CD4-positive, alpha-beta T cell (primary cell): ENCODE measurements at regions of chr1 and their contacts with region 1.

Region 1: GRCh38 chr1:2133039-2133878 is 61.3 kb downstream of the FAAP20 start:
- DNase-seq: peak; percentile 93 to 99 (median 97)
- ATAC-seq: peak; percentile 90
- H3K4me3 ChIP-seq: peak overlapping the region; percentile 70
- H3K4me3 Mint-ChIP-seq: peak overlapping the region; percentile 90
- H3K27ac ChIP-seq: peak overlapping the region; percentile 70 to 91
- H3K27ac Mint-ChIP-seq: peak overlapping the region; percentile 90
- H3K4me1 ChIP-seq: peaks cover 22% of the 10 kb centered on the region
- H3K4me1 Mint-ChIP-seq: peaks cover 32% of the 10 kb centered on the region
- H3K27me3 ChIP-seq: no peaks in the 10 kb centered on the region
- H3K27me3 Mint-ChIP-seq: no peaks in the 10 kb centered on the region
- CTCF ChIP-seq: no peak

Region 2: GRCh38 chr1:1919304-1920056 is 213.8 kb before region 1 on chr1:
- CTCF ChIA-PET with region 1: no interaction called
- POLR2A ChIA-PET with region 1: no interaction called
- intact Hi-C with region 1: loop called in 1 of 2 experiments (anchors 5 kb)
- DNase-seq: peak; percentile 99 to 100 (median 100)
- ATAC-seq: peak; percentile 89
- H3K4me3 ChIP-seq: peak overlapping the region; percentile 50
- H3K4me3 Mint-ChIP-seq: peak overlapping the region; percentile 72
- H3K27ac ChIP-seq: peak overlapping the region; percentile 41 to 52
- H3K27ac Mint-ChIP-seq: peak overlapping the region; percentile 81
- H3K4me1 ChIP-seq: peaks cover 26% of the 10 kb centered on the region
- H3K4me1 Mint-ChIP-seq: peaks cover 4% of the 10 kb centered on the region
- H3K27me3 ChIP-seq: no peaks in the 10 kb centered on the region
- H3K27me3 Mint-ChIP-seq: no peaks in the 10 kb centered on the region
- CTCF ChIP-seq: no peak

Region 3: GRCh38 chr1:2049718-2050427 is 83.4 kb before region 1 on chr1 and contains the start of gene PRKCZ:
- CTCF ChIA-PET with region 1: interaction called, 3 read pairs
- POLR2A ChIA-PET with region 1: no interaction called
- intact Hi-C with region 1: loop called in 1 of 2 experiments (anchors 5 kb)
- DNase-seq: peak; percentile 86 to 98 (median 94)
- ATAC-seq: peak; percentile 98
- H3K4me3 ChIP-seq: peak within 1 kb of the TSS; percentile 90
- H3K4me3 Mint-ChIP-seq: peak within 1 kb of the TSS; percentile 84
- H3K27ac ChIP-seq: peak within 1 kb of the TSS in 1 of 2 donors; percentile 4
- H3K27ac Mint-ChIP-seq: peak within 1 kb of the TSS; percentile 64
- H3K4me1 ChIP-seq: peaks cover 42% of the 10 kb centered on the region
- H3K4me1 Mint-ChIP-seq: peaks cover 24% of the 10 kb centered on the region
- H3K27me3 ChIP-seq: peaks cover 9 to 16% of the 10 kb centered on the region in 2 experiments
- H3K27me3 Mint-ChIP-seq: peaks cover 16% of the 10 kb centered on the region
- CTCF ChIP-seq: no peak
- total RNA-seq, gene PRKCZ: 17.8 to 19.0 TPM

Region 4: GRCh38 chr1:2108213-2108876 is 24.9 kb before region 1 on chr1:
- CTCF ChIA-PET with region 1: no interaction called
- POLR2A ChIA-PET with region 1: no interaction called
- intact Hi-C with region 1: no loop called
- DNase-seq: no peak
- ATAC-seq: no peak
- H3K4me3 ChIP-seq: no peak overlapping the region
- H3K4me3 Mint-ChIP-seq: no peak overlapping the region
- H3K27ac ChIP-seq: no peak overlapping the region
- H3K27ac Mint-ChIP-seq: no peak overlapping the region
- H3K4me1 ChIP-seq: no peaks in the 10 kb centered on the region
- H3K4me1 Mint-ChIP-seq: no peaks in the 10 kb centered on the region
- H3K27me3 ChIP-seq: no peaks in the 10 kb centered on the region
- H3K27me3 Mint-ChIP-seq: no peaks in the 10 kb centered on the region
- CTCF ChIP-seq: no peak

Region 5: GRCh38 chr1:2121101-2121691 is 12.1 kb before region 1 on chr1:
- CTCF ChIA-PET with region 1: no interaction called
- POLR2A ChIA-PET with region 1: no interaction called
- intact Hi-C with region 1: no loop called
- DNase-seq: no peak
- ATAC-seq: no peak
- H3K4me3 ChIP-seq: no peak overlapping the region
- H3K4me3 Mint-ChIP-seq: no peak overlapping the region
- H3K27ac ChIP-seq: no peak overlapping the region
- H3K27ac Mint-ChIP-seq: no peak overlapping the region
- H3K4me1 ChIP-seq: peaks cover 5% of the 10 kb centered on the region
- H3K4me1 Mint-ChIP-seq: peaks cover 6% of the 10 kb centered on the region
- H3K27me3 ChIP-seq: no peaks in the 10 kb centered on the region
- H3K27me3 Mint-ChIP-seq: no peaks in the 10 kb centered on the region
- CTCF ChIP-seq: no peak

Region 6: DNA sequence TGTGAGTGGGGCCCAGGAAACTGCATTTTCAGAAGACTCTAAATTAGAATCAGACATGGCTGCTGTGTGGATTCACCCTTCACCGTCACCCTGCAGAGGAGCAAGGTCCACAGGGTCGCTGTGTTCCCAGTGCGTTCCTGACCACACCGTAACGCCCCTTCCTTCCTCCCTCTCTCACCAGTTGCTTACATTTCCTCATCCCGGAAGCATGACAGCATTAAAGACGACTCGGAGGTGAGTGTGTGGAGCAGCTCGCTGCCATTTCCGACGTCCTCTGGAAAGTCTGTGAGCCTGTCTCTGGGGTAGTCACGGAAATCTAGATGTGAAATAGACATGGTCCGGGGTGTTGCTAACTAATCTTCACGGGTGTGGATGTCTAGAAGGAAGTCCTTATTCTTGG is 15.4 kb after region 1 on chr1:
- CTCF ChIA-PET with region 1: no interaction called
- POLR2A ChIA-PET with region 1: interaction called, 12 read pairs
- intact Hi-C with region 1: loop called in 1 of 2 experiments (anchors 1 kb)
- DNase-seq: peak in 13 of 14 experiments; percentile 37 to 92 (median 53)
- ATAC-seq: peak; percentile 61
- H3K4me3 ChIP-seq: peak overlapping the region; percentile 39
- H3K4me3 Mint-ChIP-seq: no peak overlapping the region
- H3K27ac ChIP-seq: peak overlapping the region; percentile 39 to 76
- H3K27ac Mint-ChIP-seq: no peak overlapping the region
- H3K4me1 ChIP-seq: peaks cover 56% of the 10 kb centered on the region
- H3K4me1 Mint-ChIP-seq: peaks cover 21% of the 10 kb centered on the region
- H3K27me3 ChIP-seq: no peaks in the 10 kb centered on the region
- H3K27me3 Mint-ChIP-seq: no peaks in the 10 kb centered on the region
- CTCF ChIP-seq: no peak

Region 7: GRCh38 chr1:2174348-2175054 is 41.2 kb after region 1 on chr1:
- CTCF ChIA-PET with region 1: interaction called, 3 read pairs
- POLR2A ChIA-PET with region 1: interaction called, 4 read pairs
- intact Hi-C with region 1: loop called in 1 of 2 experiments (anchors 1 kb)
- DNase-seq: peak in 8 of 14 experiments; percentile 19 to 68 (median 32)
- ATAC-seq: peak; percentile 70
- H3K4me3 ChIP-seq: peak overlapping the region; percentile 28
- H3K4me3 Mint-ChIP-seq: peak overlapping the region; percentile 60
- H3K27ac ChIP-seq: no peak overlapping the region
- H3K27ac Mint-ChIP-seq: no peak overlapping the region
- H3K4me1 ChIP-seq: peaks cover 10% of the 10 kb centered on the region
- H3K4me1 Mint-ChIP-seq: no peaks in the 10 kb centered on the region
- H3K27me3 ChIP-seq: no peaks in the 10 kb centered on the region
- H3K27me3 Mint-ChIP-seq: no peaks in the 10 kb centered on the region
- CTCF ChIP-seq: peak; percentile 79

Region 8: DNA sequence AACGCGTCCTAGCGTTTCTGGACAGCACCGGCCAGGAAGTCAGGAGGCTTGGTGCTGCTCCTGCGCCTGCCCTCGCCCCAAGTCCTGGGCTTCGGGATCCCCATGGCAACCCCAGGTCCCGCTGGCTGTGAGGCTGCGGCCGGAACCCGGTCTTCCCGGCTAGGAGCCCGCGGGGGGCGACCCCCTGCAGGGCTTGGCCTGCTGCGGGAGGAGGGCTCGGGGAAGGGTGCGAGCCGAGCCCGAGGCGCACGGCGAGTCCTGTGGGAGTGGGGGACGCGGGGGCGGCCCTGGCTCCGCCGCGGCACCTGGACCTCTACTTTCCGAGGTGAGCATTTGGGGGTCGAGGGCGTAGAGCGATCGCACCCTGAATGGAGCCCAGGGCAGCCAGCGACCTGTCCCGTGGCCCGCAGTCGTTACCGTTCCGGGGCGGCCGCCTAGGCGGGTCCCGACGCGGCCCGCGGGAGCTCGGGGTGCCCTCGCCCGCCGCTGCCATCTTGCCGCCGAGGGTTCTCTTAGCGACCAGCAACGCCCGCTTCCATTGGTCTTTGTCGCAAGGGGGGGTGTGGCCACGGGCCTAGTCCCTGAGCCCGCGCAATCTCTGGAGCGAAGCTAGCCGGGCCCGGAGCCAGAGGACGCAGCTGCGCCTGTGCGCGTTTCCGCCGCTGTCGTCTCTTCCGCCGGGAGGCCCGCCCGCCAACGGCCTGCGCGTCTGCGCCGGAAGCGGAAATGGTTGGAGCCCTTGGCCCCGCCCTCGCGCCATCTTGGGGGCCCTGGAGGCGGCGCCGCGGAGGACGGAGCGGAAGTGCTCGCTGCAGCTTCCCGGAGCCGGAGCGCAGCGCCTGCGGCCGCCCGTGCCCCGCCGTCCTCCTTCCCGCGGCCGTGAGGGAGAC is 258.0 kb after region 1 on chr1 and contains the starts of genes MORN1 and RER1:
- CTCF ChIA-PET with region 1: no interaction called
- POLR2A ChIA-PET with region 1: interaction called, 4 read pairs
- intact Hi-C with region 1: loop called in 1 of 2 experiments (anchors 5 kb)
- DNase-seq: peak; percentile 97 to 100 (median 99)
- ATAC-seq: peak; percentile 95
- H3K4me3 ChIP-seq: peak within 1 kb of the TSS; percentile 64
- H3K4me3 Mint-ChIP-seq: peak within 1 kb of the TSS; percentile 95
- H3K27ac ChIP-seq: peak within 1 kb of the TSS; percentile 60 to 63
- H3K27ac Mint-ChIP-seq: peak within 1 kb of the TSS; percentile 88
- H3K4me1 ChIP-seq: peaks cover 45% of the 10 kb centered on the region
- H3K4me1 Mint-ChIP-seq: peaks cover 31% of the 10 kb centered on the region
- H3K27me3 ChIP-seq: no peaks in the 10 kb centered on the region
- H3K27me3 Mint-ChIP-seq: no peaks in the 10 kb centered on the region
- CTCF ChIP-seq: no peak
- total RNA-seq, gene MORN1: 5.3 to 6.5 TPM
- total RNA-seq, gene RER1: 57.9 to 60.7 TPM

Region 9: DNA sequence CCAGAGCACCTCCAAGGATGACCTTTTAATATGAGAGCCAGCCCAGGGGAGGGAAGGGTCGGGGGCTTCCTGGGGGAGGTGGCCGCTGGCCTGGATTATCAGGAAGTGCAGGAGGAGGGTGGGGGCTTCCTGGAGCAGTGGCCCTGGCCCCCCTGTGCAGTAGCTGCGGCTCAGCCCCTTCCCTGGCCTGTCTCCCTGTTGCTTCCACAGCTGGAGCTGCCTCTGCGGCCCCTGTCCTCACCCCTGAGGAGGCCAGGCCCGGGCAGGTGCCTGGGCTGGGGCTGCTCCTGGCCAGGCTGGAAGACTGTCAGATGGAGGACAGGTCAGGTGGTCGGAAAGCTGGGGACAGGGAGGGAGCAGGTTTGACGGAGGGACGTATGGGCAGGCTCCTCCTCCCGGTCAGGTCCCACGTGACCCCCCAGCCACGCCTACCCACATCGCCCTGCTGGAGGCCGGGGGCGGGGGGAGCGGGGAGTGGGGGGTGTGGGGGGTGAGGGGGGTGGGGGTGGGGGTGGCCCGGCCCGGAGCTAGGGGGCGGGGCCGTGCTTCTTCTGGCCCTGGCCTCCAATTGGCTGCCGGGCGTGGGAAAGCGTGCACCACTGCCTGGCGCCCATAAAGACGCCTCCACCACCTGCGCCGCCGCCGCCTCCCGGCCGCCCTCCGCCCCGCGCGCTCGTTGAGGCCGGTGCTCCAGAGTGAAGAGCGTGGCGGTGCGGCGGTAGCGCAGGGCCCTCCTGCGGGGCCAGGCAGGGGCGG is 412.7 kb after region 1 on chr1:
- CTCF ChIA-PET with region 1: no interaction called
- POLR2A ChIA-PET with region 1: no interaction called
- intact Hi-C with region 1: loop called in 1 of 2 experiments (anchors 10 kb)
- DNase-seq: peak; percentile 82 to 97 (median 88)
- ATAC-seq: peak; percentile 45
- H3K4me3 ChIP-seq: peak overlapping the region; percentile 81
- H3K4me3 Mint-ChIP-seq: peak overlapping the region; percentile 95
- H3K27ac ChIP-seq: peak overlapping the region; percentile 96 to 99
- H3K27ac Mint-ChIP-seq: peak overlapping the region; percentile 99
- H3K4me1 ChIP-seq: peaks cover 70% of the 10 kb centered on the region
- H3K4me1 Mint-ChIP-seq: peaks cover 38% of the 10 kb centered on the region
- H3K27me3 ChIP-seq: peaks cover 0 to 2% of the 10 kb centered on the region in 2 experiments
- H3K27me3 Mint-ChIP-seq: no peaks in the 10 kb centered on the region
- CTCF ChIP-seq: no peak